ENCODE measurements at regions of chr10 and their contacts with region 1.

Region 1: DNA sequence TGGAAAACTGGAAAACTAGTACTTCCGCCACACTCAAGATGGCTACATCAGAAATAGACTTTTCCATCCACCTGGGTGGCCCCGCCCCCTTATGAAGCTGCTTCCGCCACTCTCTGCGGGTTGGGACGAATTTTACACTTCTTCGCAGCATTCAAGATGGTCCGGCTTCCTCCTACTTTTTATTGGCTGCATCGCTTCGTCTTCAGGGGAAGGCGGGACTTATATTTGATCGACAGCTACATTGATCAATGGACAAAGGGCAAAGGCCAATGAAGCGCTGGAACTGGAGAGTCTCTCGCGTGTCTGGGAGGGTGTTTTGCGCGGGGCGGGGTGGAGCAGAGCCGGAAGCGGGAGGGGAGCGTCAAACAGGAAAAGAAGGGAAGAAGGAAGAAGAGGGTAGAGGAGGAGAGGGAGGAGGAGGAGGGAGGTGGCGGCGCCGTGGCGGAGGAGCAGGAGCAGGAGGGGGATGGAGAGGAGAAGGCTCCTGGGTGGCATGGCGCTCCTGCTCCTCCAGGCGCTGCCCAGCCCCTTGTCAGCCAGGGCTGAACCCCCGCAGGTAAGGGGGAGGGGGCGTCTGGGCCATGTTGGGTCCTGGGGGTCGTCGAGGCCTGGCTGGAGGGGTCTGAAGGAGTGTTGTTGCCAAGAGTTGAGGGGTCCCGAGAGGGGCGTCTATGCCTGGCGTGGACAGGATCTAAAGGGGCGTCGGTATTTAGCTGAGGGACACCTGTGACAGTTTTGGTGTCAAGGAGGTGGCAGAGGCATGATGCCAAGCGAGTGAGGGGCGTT is at the start of gene WBP1L:
- DNase-seq: peak; percentile 100
- H3K4me3 ChIP-seq: peak within 1 kb of the TSS; percentile 43 to 91 (median 52)
- H3K27ac ChIP-seq: peak within 1 kb of the TSS; percentile 35
- H3K4me1 ChIP-seq: peaks cover 15% of the 10 kb centered on the region
- H3K27me3 ChIP-seq: no peaks in the 10 kb centered on the region
- CTCF ChIP-seq: no peak
- POLR2A ChIP-seq: peak; percentile 45
- total RNA-seq, gene WBP1L: 43.6 and 46.0 TPM in 2 replicates

Region 2: DNA sequence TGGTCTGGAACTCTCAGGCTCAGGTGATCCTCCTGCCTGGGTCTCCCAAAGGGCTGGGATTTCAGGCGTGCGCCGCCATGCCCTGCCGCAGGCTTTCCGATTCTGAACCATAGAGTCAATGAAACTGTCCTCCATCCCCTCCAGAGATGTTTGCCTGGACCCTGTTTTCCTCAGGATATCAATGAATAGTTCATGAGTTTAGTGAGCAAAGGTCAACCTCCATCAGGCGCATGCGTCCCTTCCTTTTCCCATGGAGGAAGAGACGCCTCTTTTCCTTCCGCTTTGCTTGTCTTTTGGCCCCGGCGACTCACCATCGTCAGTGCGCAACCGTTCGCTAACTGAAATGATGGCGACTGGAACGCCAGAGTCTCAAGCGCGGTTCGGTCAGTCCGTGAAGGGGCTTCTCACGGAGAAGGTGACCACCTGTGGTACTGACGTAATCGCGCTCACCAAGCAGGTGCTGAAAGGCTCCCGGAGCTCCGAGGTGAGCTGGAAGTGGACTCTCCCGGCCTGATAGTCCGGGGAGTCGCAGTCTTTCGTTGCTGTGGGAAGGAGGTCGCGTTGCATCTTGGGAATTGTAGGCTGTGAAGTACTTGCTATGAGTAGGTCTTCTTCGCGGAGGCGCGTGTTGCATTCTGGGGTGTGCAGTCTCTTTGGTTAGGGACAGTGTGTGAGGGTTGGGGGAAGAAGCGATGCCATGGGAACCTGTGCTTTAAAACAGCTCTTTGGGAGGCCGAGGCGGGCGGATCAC is 110.3 kb after region 1 on chr10 and contains the start of gene BORCS7:
- CTCF ChIA-PET with region 1: no interaction called
- POLR2A ChIA-PET with region 1: no interaction called
- dilution Hi-C with region 1: no loop called
- intact Hi-C with region 1: loop called (anchors 1 kb)
- DNase-seq: peak; percentile 94
- H3K4me3 ChIP-seq: peak within 1 kb of the TSS; percentile 52 to 81 (median 60)
- H3K27ac ChIP-seq: peak within 1 kb of the TSS; percentile 86
- H3K4me1 ChIP-seq: peaks cover 3% of the 10 kb centered on the region
- H3K27me3 ChIP-seq: no peaks in the 10 kb centered on the region
- CTCF ChIP-seq: no peak
- POLR2A ChIP-seq: peak; percentile 88
- total RNA-seq, gene BORCS7: 16.2 and 16.9 TPM in 2 replicates